Activated naive CD4-positive, alpha-beta T cell treated with anti-CD3 and anti-CD28 coated beads for 36 hours (primary cell): ENCODE measurements at regions of chr14 and their contacts with region 1.

Region 1: GRCh38 chr14:106790189-106791036 is 1264.0 kb downstream of the TMEM121 start:
- DNase-seq: peak; percentile 89
- H3K4me3 Mint-ChIP-seq: no peak overlapping the region
- H3K27ac Mint-ChIP-seq: no peak overlapping the region
- H3K4me1 Mint-ChIP-seq: peaks cover 10% of the 10 kb centered on the region
- H3K27me3 Mint-ChIP-seq: peaks cover 4% of the 10 kb centered on the region

Region 2: GRCh38 chr14:106776395-106776983 is 13.9 kb before region 1 on chr14:
- CTCF ChIA-PET with region 1: interaction called, 13 read pairs
- intact Hi-C with region 1: no loop called
- DNase-seq: no peak
- H3K4me3 Mint-ChIP-seq: no peak overlapping the region
- H3K27ac Mint-ChIP-seq: no peak overlapping the region
- H3K4me1 Mint-ChIP-seq: peaks cover 18% of the 10 kb centered on the region
- H3K27me3 Mint-ChIP-seq: peaks cover 3% of the 10 kb centered on the region

Region 3: GRCh38 chr14:106813477-106813823 is 23.0 kb after region 1 on chr14:
- CTCF ChIA-PET with region 1: no interaction called
- intact Hi-C with region 1: no loop called
- DNase-seq: no peak
- H3K4me3 Mint-ChIP-seq: no peak overlapping the region
- H3K27ac Mint-ChIP-seq: no peak overlapping the region
- H3K4me1 Mint-ChIP-seq: peaks cover 9% of the 10 kb centered on the region
- H3K27me3 Mint-ChIP-seq: peaks cover under 1% of the 10 kb centered on the region